ENCODE measurements at regions of chr6 and their contacts with region 1.

Region 1: DNA sequence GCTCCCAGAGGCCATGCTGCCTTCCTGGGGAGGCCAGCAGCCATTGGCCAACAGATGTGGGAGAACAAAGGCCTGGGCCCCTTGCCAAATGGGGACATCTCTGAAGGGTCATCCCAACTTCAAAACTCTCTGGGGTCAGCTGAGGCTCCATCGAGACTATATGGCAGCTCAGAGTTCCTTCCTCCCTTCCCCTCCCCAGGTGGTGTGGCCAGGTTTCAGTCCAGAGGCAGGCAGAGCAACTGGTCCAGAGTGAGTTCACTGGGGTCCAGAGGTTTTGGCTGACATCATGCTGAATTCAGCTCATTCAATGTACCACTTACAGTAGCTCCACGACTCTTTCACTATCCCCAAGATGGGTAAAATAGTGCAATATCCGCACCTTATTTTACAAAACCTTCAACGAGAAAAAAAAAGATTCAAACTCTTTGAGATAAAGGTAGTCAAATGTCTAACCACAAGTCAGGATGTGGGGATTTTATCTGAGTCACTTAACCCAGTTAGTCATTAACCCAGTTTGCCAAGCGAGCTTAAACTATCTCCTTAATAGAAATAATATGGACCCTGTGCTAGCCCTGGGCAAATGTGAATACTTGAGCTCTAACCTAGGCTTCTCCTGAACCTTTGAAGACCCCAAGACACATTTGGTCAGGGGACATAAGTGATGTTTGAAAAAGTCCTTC is 108.4 kb upstream of the PLEKHG1 start:
- DNase-seq: peak; percentile 30
- H3K4me3 Mint-ChIP-seq: peak overlapping the region; percentile 30
- H3K27ac Mint-ChIP-seq: peak overlapping the region; percentile 79
- H3K4me1 Mint-ChIP-seq: peaks cover 18% of the 10 kb centered on the region
- H3K27me3 Mint-ChIP-seq: no peaks in the 10 kb centered on the region
- CTCF ChIP-seq: no peak

Region 2: GRCh38 chr6:149815788-149816187 is 675.5 kb before region 1 on chr6:
- CTCF ChIA-PET with region 1: no interaction called
- intact Hi-C with region 1: no loop called
- DNase-seq: no peak
- H3K4me3 Mint-ChIP-seq: no peak overlapping the region
- H3K27ac Mint-ChIP-seq: no peak overlapping the region
- H3K4me1 Mint-ChIP-seq: no peaks in the 10 kb centered on the region
- H3K27me3 Mint-ChIP-seq: no peaks in the 10 kb centered on the region
- CTCF ChIP-seq: no peak

Region 3: DNA sequence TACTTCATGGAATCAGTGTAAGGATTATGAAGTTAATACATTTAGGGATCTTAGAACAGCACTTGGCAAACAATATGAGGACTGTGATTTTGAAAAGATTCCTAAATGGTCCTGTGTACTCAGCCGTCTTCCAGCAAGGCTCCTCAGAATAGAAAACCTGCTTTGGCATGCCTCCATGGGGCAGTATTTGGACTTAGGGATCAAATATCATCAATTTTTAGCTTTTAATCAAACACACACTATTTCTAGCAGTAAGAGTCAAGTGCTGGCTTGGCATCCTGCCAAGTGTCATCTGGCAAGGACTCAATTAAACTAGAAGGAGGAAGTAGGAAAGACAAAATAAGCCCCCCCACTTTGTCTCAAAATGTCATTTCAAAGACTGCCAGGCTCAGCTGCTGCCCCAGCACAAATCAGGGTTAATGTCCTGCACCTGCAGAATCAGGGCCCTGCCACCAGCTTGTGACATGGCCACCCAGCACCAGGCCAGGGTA is 81.7 kb before region 1 on chr6:
- CTCF ChIA-PET with region 1: no interaction called
- intact Hi-C with region 1: no loop called
- DNase-seq: peak; percentile 63
- H3K4me3 Mint-ChIP-seq: no peak overlapping the region
- H3K27ac Mint-ChIP-seq: peak overlapping the region; percentile 36
- H3K4me1 Mint-ChIP-seq: peaks cover 44% of the 10 kb centered on the region
- H3K27me3 Mint-ChIP-seq: no peaks in the 10 kb centered on the region
- CTCF ChIP-seq: no peak

Region 4: DNA sequence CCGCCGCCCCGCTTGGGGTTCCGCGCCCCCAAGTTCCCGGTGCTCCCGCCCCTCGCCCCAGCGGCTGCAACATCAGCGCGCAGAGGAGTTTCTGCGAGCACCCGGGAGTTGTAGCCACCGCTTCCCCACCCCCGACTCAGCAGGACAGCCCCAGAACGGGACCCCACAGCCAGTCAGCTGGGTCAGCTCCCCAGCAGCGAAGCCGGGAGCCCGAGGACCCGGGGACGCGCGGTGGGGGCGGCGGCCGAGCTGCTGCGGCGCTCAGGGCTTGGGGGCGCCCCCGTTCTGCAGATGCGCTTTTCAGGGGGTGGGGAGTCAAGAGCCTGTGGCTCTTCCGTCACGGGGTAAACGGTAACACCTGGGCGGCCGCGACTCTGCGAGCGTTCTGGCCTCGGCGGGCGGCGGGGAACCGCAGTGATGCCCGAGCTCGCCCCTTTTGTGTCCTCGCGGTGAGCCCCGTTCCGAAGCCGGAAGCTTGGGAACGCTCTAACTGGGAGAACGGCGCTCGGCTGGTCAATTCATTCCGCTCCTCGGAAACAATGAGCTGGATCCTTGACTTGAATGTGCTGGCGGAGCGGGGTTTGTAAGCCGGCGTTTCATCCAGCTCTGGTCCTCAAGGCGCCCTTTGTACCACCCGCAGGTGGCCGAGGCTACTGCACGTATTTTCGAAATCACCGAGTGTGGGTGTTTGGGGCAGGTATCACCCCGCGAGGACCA is 109.2 kb after region 1 on chr6:
- CTCF ChIA-PET with region 1: interaction called, 5 read pairs
- intact Hi-C with region 1: loop called (anchors 2 kb)
- DNase-seq: peak; percentile 77
- H3K4me3 Mint-ChIP-seq: peak overlapping the region; percentile 82
- H3K27ac Mint-ChIP-seq: peak overlapping the region; percentile 77
- H3K4me1 Mint-ChIP-seq: no peaks in the 10 kb centered on the region
- H3K27me3 Mint-ChIP-seq: no peaks in the 10 kb centered on the region
- CTCF ChIP-seq: peak; percentile 23

Region 5: DNA sequence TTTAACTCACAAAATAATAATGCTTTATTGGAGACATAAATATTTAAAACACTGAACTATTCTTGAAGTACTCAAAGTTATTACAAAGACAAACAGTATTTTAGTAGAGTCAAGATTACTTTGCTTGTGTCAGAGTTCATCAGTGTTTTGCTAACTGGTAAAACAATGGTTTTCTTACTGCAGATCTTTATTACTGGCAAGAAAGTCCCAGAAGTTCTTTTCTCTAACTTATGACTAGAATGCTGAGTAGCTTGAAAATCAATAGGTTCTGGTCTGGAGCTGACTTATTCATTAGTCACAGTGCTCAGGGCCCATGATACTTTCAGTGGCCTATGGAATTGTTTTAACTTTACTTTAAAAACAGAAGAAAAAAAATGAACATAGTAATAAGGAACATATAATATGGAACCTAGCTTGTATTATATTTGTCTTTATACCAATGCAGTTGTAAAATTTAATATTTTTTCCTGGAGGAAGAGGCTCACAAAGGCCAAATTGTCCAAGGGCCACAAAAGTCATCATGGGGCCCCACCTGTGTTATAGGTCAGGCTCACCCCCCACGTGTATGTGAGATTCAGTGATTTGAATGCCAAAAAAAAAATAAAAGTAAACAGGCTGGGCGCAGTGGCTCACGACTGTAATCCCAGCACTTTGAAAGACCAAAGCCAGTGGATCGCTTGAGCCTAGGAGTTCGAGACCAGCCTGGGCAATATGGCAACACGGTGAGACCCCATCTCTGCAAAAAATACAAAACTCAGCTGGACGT is 161.8 kb after region 1 on chr6:
- CTCF ChIA-PET with region 1: no interaction called
- intact Hi-C with region 1: loop called (anchors 10 kb)
- DNase-seq: peak; percentile 16
- H3K4me3 Mint-ChIP-seq: no peak overlapping the region
- H3K27ac Mint-ChIP-seq: no peak overlapping the region
- H3K4me1 Mint-ChIP-seq: no peaks in the 10 kb centered on the region
- H3K27me3 Mint-ChIP-seq: no peaks in the 10 kb centered on the region
- CTCF ChIP-seq: no peak

Region 6: GRCh38 chr6:150830439-150831165 is 339.3 kb after region 1 on chr6:
- CTCF ChIA-PET with region 1: no interaction called
- intact Hi-C with region 1: no loop called
- DNase-seq: no peak
- H3K4me3 Mint-ChIP-seq: no peak overlapping the region
- H3K27ac Mint-ChIP-seq: no peak overlapping the region
- H3K4me1 Mint-ChIP-seq: no peaks in the 10 kb centered on the region
- H3K27me3 Mint-ChIP-seq: no peaks in the 10 kb centered on the region
- CTCF ChIP-seq: no peak

Measured in Calu3 (cell line).